Adrenal gland (tissue), 19 donors: ENCODE measurements at regions of chr4 and their contacts with region 1.

Region 1: DNA sequence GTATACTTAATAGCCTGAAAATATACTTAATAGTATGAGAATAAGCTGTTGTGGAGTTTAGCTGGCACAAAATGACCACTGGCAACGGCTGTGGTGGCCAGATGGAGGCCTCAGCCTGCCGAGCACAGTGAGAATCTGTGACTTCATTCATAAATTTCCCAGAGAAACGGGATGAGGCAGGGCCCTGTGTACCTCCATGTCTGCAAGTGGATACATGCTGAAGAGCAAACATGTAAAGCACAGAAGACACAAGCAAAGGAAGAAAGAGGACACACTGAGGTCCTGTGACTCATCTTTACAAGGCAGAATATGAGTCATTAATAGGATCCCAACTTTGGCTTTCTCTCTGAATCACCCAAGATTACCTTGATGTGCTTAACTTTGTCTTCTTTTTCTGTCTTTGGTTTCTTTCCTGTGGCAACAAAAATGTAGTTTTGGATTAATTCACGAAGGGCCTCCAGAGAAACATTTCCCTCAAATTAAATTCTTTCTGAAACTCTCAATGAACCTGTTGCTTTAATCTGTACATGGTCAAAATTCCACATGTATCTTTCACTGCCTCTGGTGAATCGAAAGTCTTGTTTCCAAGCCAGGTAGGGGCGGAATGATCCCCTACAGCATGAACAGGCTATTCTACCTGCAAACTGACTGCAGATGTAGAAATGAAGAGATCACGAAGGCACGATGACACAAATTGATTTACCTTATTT is 56.4 kb downstream of the IRF2 start:
- DNase-seq: peak in 2 of 7 donors; percentile 42 to 64
- H3K4me3 ChIP-seq: peak overlapping the region in 1 of 4 donors; percentile 30
- H3K27ac ChIP-seq: peak overlapping the region in 4 of 5 donors; percentile 58 to 87 (median 71)
- H3K4me1 ChIP-seq: peaks cover 13 to 43% of the 10 kb centered on the region in 2 donors
- H3K27me3 ChIP-seq: no peaks in the 10 kb centered on the region
- CTCF ChIP-seq: no peak
- POLR2A ChIP-seq: no peak

Region 2: DNA sequence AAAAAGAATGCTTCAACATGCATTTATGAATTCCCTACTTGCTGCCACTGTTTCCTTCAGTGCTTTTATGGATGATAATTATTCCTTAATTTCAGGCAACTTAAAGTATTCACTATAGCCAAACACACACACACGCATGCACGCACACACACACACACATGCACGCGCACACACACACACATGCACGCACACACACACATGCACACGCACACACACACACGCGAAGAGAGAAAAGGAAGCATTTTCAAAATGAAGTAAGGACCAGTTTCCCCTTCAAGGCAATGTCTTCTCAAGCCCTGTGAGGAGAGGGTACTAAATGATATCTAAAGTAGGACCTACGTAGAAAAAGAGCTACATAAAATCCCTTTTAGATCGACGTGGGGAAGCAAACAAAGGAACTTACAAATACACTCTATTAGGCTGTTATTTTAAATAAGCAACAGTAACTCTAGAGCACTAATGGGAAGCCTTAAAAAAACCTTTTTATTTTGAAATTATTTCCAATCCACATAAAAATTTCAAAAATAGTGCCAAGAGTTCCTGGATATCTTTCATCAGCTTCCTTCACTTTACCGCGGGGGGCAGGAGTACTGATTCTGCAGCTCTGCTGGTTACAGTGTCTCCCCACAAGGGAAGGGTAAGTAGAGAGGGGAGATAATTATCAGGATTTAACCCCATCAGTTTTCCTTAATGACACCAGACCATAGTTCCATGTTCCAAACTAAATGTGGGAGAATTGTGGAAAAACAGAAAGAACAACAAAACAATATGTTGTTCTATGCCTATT is 42.7 kb after region 1 on chr4:
- intact Hi-C with region 1: loop called in 1 of 2 experiments (anchors 10 kb)
- DNase-seq: no peak
- H3K4me3 ChIP-seq: no peak overlapping the region
- H3K27ac ChIP-seq: no peak overlapping the region
- H3K4me1 ChIP-seq: peaks cover 17 to 32% of the 10 kb centered on the region in 2 donors
- H3K27me3 ChIP-seq: no peaks in the 10 kb centered on the region
- CTCF ChIP-seq: no peak
- POLR2A ChIP-seq: no peak